ENCODE measurements at regions of chr1 and their contacts with region 1.

Region 1: GRCh38 chr1:93814059-93814794 is 64.8 kb downstream of the DNTTIP2 start:
- DNase-seq: peak; percentile 59 to 71
- H3K4me3 ChIP-seq: no peak overlapping the region
- H3K4me3 Mint-ChIP-seq: no peak overlapping the region
- H3K27ac Mint-ChIP-seq: no peak overlapping the region
- H3K4me1 ChIP-seq: peaks cover 21% of the 10 kb centered on the region
- H3K4me1 Mint-ChIP-seq: peaks cover 25% of the 10 kb centered on the region
- H3K27me3 ChIP-seq: no peaks in the 10 kb centered on the region
- H3K27me3 Mint-ChIP-seq: no peaks in the 10 kb centered on the region
- CTCF ChIP-seq: peak; percentile 79 to 83

Region 2: GRCh38 chr1:93304716-93305138 is 509.5 kb before region 1 on chr1:
- CTCF ChIA-PET with region 1: interaction called, 13 read pairs
- POLR2A ChIA-PET with region 1: no interaction called
- intact Hi-C with region 1: no loop called
- DNase-seq: peak; percentile 43 to 52
- H3K4me3 ChIP-seq: no peak overlapping the region
- H3K4me3 Mint-ChIP-seq: no peak overlapping the region
- H3K27ac Mint-ChIP-seq: no peak overlapping the region
- H3K4me1 ChIP-seq: no peaks in the 10 kb centered on the region
- H3K4me1 Mint-ChIP-seq: peaks cover 6% of the 10 kb centered on the region
- H3K27me3 ChIP-seq: no peaks in the 10 kb centered on the region
- H3K27me3 Mint-ChIP-seq: peaks cover 4% of the 10 kb centered on the region
- CTCF ChIP-seq: peak; percentile 47 to 58

Region 3: GRCh38 chr1:93437976-93438605 is 376.1 kb before region 1 on chr1:
- CTCF ChIA-PET with region 1: interaction called, 3 read pairs
- POLR2A ChIA-PET with region 1: no interaction called
- intact Hi-C with region 1: loop called (anchors 1 kb)
- DNase-seq: peak in 1 of 2 experiments; percentile 14
- H3K4me3 ChIP-seq: no peak overlapping the region
- H3K4me3 Mint-ChIP-seq: no peak overlapping the region
- H3K27ac Mint-ChIP-seq: no peak overlapping the region
- H3K4me1 ChIP-seq: peaks cover 5% of the 10 kb centered on the region; the same call in 1 of the 2 replicates
- H3K4me1 Mint-ChIP-seq: no peaks in the 10 kb centered on the region
- H3K27me3 ChIP-seq: no peaks in the 10 kb centered on the region
- H3K27me3 Mint-ChIP-seq: no peaks in the 10 kb centered on the region
- CTCF ChIP-seq: peak; percentile 24

Region 4: DNA sequence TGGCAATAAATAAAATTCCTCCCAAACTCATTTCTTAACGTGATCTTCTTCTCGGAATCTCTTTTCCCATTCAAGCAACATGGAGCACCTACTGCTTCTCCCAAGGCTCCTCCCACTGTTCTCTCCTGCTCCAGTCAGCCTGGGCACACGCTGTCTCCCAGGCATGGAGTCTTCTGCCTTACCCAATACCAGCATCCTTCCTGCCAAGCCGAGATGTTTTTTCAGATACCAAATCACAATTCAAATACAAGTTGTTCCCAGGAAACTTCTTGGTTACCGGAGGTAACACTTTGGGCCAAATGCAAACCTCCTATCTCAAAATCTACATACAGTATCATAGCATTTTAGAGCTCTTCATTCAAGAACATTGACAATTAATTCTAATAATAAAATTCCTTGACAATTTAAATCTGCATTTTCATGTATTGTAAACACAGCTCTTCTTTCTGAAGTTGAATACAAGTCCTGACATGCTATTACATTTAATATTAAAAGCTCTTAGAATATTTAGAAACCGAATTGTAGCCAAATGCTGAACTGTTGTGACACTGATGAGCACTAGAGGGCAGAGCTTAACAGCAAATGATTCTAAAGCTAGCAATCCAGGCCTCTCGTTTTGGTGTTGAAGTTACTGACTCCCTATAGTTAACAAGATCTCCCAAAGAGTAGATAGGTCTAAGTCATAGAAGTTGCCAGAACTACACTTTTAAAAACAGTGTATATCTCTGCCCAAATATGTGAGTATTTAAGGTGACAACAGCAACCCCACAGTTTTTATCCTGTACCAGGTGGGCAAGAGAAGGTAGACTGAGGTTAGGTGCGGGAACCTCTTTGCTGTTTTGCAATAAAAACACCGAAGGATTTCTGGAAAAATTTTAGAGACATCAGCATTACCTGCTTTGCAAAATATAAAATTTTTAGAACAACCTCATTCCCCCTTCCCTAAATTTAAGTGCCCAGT is 184.8 kb before region 1 on chr1:
- CTCF ChIA-PET with region 1: interaction called, 89 read pairs
- POLR2A ChIA-PET with region 1: no interaction called
- intact Hi-C with region 1: loop called (anchors 1 kb)
- DNase-seq: peak in 1 of 2 experiments; percentile 40
- H3K4me3 ChIP-seq: no peak overlapping the region
- H3K4me3 Mint-ChIP-seq: no peak overlapping the region
- H3K27ac Mint-ChIP-seq: no peak overlapping the region
- H3K4me1 ChIP-seq: no peaks in the 10 kb centered on the region
- H3K4me1 Mint-ChIP-seq: peaks cover 6% of the 10 kb centered on the region
- H3K27me3 ChIP-seq: no peaks in the 10 kb centered on the region
- H3K27me3 Mint-ChIP-seq: no peaks in the 10 kb centered on the region
- CTCF ChIP-seq: peak; percentile 39 to 64

Region 5: GRCh38 chr1:93680757-93681550 is 133.3 kb before region 1 on chr1:
- CTCF ChIA-PET with region 1: interaction called, 15 read pairs
- POLR2A ChIA-PET with region 1: no interaction called
- intact Hi-C with region 1: loop called (anchors 2 kb)
- DNase-seq: peak; percentile 65 to 74
- H3K4me3 ChIP-seq: peak overlapping the region; percentile 59
- H3K4me3 Mint-ChIP-seq: peak overlapping the region; percentile 91
- H3K27ac Mint-ChIP-seq: peak overlapping the region; percentile 50
- H3K4me1 ChIP-seq: peaks cover 15% of the 10 kb centered on the region
- H3K4me1 Mint-ChIP-seq: peaks cover 26% of the 10 kb centered on the region
- H3K27me3 ChIP-seq: no peaks in the 10 kb centered on the region
- H3K27me3 Mint-ChIP-seq: no peaks in the 10 kb centered on the region
- CTCF ChIP-seq: peak; percentile 24 to 35

Region 6: DNA sequence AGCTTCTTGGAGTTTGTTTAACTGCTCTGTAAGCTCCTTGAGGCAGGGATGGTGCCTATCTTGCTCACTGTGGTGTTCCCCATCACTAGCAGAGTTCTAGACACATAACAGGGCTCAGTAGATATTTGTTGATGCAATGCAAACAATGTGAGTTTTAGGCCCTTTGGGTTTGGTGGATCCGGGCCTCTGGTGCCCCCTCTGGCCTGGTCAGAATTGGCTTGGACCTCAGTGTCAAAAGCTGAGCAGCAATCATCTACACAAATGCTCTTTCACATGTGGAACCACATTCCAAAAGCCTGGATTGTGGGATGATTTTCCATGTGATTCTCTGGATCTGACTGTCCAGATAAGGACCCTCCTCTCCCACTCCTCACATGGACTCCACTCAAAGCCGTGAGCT is 79.2 kb before region 1 on chr1:
- CTCF ChIA-PET with region 1: interaction called, 4 read pairs
- POLR2A ChIA-PET with region 1: no interaction called
- intact Hi-C with region 1: loop called (anchors 2 kb)
- DNase-seq: peak in 1 of 2 experiments; percentile 15
- H3K4me3 ChIP-seq: no peak overlapping the region
- H3K4me3 Mint-ChIP-seq: no peak overlapping the region
- H3K27ac Mint-ChIP-seq: no peak overlapping the region
- H3K4me1 ChIP-seq: no peaks in the 10 kb centered on the region
- H3K4me1 Mint-ChIP-seq: no peaks in the 10 kb centered on the region
- H3K27me3 ChIP-seq: no peaks in the 10 kb centered on the region
- H3K27me3 Mint-ChIP-seq: no peaks in the 10 kb centered on the region
- CTCF ChIP-seq: peak in 1 of 2 experiments; percentile 33

Region 7: GRCh38 chr1:93768380-93768863 is 45.8 kb before region 1 on chr1:
- CTCF ChIA-PET with region 1: interaction called, 4 read pairs
- POLR2A ChIA-PET with region 1: no interaction called
- intact Hi-C with region 1: loop called (anchors 5 kb)
- DNase-seq: no peak
- H3K4me3 ChIP-seq: no peak overlapping the region
- H3K4me3 Mint-ChIP-seq: peak overlapping the region; percentile 50
- H3K27ac Mint-ChIP-seq: no peak overlapping the region
- H3K4me1 ChIP-seq: peaks cover 21% of the 10 kb centered on the region
- H3K4me1 Mint-ChIP-seq: peaks cover 16% of the 10 kb centered on the region
- H3K27me3 ChIP-seq: no peaks in the 10 kb centered on the region
- H3K27me3 Mint-ChIP-seq: no peaks in the 10 kb centered on the region
- CTCF ChIP-seq: no peak

Region 8: DNA sequence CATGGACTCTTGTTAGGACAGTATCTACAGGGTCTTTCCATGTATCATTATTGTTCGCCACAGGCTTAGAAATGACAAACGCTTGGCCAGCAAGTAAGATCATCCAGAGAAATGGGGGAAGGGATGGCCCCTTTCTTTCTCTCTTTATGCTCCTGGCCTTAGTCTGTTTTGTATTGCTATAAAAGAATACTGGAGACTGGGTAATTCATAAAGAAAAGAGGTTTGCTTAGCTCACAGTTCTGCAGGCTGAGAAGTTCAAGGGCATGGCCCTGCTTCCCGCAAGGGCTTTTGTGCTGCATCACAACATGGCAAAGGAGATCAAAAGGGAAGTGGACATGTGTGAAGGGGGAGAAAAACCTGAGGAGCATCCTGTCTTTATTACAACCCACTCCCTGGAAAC is 23.7 kb after region 1 on chr1:
- CTCF ChIA-PET with region 1: no interaction called
- POLR2A ChIA-PET with region 1: no interaction called
- intact Hi-C with region 1: no loop called
- DNase-seq: no peak
- H3K4me3 ChIP-seq: no peak overlapping the region
- H3K4me3 Mint-ChIP-seq: no peak overlapping the region
- H3K27ac Mint-ChIP-seq: no peak overlapping the region
- H3K4me1 ChIP-seq: no peaks in the 10 kb centered on the region
- H3K4me1 Mint-ChIP-seq: no peaks in the 10 kb centered on the region
- H3K27me3 ChIP-seq: no peaks in the 10 kb centered on the region
- H3K27me3 Mint-ChIP-seq: no peaks in the 10 kb centered on the region
- CTCF ChIP-seq: no peak

Region 9: DNA sequence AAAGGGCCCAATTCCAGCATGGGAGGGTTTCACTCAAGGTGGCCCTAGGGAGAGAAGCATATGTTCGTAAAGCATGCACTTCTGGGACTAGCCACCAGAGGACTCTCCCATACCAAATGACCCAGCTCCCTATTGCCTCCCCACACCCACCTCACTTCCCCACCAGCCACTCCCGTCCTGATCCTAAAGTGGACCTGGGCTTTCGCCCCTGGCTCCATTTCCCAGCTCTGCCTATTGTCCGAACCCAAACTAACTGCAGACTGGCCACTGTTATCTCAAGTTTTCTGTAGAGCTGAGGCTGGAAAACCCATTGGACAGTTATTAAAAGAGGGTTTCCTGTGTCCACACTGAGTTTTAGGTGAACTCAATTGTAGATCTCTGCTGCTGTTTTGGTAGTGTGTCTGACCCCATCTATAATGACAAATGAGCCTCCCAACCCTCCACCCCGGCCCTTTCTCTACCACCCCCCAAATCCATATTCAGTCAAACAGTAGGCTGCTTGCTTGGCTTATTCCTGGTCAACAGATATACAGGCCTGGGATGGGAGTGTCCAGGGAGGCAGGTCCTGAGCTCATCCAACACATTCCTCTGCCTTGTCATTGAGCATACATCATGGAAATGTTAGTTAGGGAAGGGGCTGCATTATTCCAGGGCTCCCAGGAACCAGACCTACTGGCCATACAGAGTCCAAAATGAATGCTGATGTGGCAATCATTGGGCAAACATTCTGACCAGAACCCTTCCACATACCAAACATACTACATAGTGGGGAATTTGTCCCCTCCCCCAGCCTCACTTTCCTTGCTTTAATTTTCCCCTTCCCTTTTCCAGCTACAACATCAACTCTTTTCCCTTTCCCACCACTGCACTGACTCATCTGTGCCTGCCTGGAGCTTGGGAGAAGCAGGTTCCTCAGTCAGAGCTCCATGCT is 247.6 kb after region 1 on chr1:
- CTCF ChIA-PET with region 1: no interaction called
- POLR2A ChIA-PET with region 1: no interaction called
- intact Hi-C with region 1: no loop called
- DNase-seq: peak; percentile 81 to 86
- H3K4me3 ChIP-seq: no peak overlapping the region
- H3K4me3 Mint-ChIP-seq: no peak overlapping the region
- H3K27ac Mint-ChIP-seq: peak overlapping the region; percentile 28
- H3K4me1 ChIP-seq: peaks cover 32% of the 10 kb centered on the region
- H3K4me1 Mint-ChIP-seq: peaks cover 22% of the 10 kb centered on the region
- H3K27me3 ChIP-seq: no peaks in the 10 kb centered on the region
- H3K27me3 Mint-ChIP-seq: no peaks in the 10 kb centered on the region
- CTCF ChIP-seq: peak; percentile 72